Heart right ventricle (tissue), 16 donors: ENCODE measurements at regions of chr5 and their contacts with region 1.

Region 1: GRCh38 chr5:40904205-40904993 is 4.9 kb upstream of the C7 start:
- DNase-seq: peak; percentile 34 to 78
- ATAC-seq: peak; percentile 93 to 96 (median 94)
- H3K4me3 ChIP-seq: no peak overlapping the region
- H3K27ac ChIP-seq: peak overlapping the region in 9 of 10 donors; percentile 6 to 67 (median 57)
- H3K4me1 ChIP-seq: peaks cover 0 to 24% (median 17%) of the 10 kb centered on the region in 9 donors
- H3K27me3 ChIP-seq: no peaks in the 10 kb centered on the region
- CTCF ChIP-seq: peak; percentile 91 to 98 (median 94)

Region 2: DNA sequence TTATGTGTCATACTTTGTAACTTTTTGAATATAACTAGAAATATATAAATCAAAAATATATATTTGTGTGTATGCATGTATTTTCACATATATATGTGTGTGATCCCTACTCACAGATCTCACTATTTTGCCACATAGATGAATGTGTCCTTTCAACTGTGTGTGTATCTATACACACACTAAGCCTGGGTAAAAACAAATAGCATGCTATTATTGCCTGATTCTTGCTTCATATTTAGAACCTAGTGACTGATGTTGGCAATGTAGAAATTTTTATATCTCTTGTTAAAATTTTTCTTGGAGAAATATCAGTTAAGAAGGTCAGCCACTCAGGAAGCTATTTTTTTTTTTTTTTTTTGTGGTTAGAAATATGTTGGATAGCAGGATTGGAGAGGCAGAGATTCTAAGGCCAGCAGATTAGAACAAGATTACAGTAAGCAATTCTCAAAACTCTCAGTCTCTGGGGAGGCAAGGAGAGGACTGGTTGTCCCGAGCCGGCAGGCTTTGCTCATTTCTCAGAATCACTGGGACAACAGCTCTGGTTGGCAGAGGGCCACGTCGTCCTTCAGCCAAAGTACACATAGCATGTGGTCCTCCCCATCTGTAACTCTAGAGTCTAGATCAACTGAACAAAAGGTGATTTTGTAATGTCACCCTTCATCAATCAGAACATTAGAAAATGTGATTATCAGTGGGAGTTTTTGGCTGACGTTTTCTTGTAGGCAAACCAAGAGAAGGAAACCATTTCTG is 289.2 kb after region 1 on chr5:
- intact Hi-C with region 1: loop called in 2 of 10 experiments (anchors 5 to 10 kb)
- DNase-seq: peak; percentile 97
- ATAC-seq: peak; percentile 95 to 98 (median 97)
- H3K4me3 ChIP-seq: no peak overlapping the region
- H3K27ac ChIP-seq: peak overlapping the region; percentile 50 to 84 (median 72)
- H3K4me1 ChIP-seq: peaks cover 4 to 27% (median 18%) of the 10 kb centered on the region in 9 donors
- H3K27me3 ChIP-seq: no peaks in the 10 kb centered on the region
- CTCF ChIP-seq: no peak

Region 3: GRCh38 chr5:41334758-41335157 is 430.4 kb after region 1 on chr5:
- intact Hi-C with region 1: loop called in 1 of 10 experiments (anchors 5 kb)
- DNase-seq: peak in 1 of 2 donors; percentile 13
- ATAC-seq: peak in 7 of 8 donors; percentile 44 to 80 (median 74)
- H3K4me3 ChIP-seq: no peak overlapping the region
- H3K27ac ChIP-seq: peak overlapping the region; percentile 1 to 74 (median 51)
- H3K4me1 ChIP-seq: peaks cover 7 to 49% (median 31%) of the 10 kb centered on the region in 9 donors
- H3K27me3 ChIP-seq: no peaks in the 10 kb centered on the region
- CTCF ChIP-seq: no peak

Region 4: GRCh38 chr5:41524174-41524573 is 619.8 kb after region 1 on chr5:
- intact Hi-C with region 1: loop called in 5 of 10 experiments (anchors 5 to 10 kb)
- DNase-seq: no peak
- ATAC-seq: no peak
- H3K4me3 ChIP-seq: no peak overlapping the region
- H3K27ac ChIP-seq: no peak overlapping the region
- H3K4me1 ChIP-seq: peaks cover 0 to 14% (median 0%) of the 10 kb centered on the region in 9 donors
- H3K27me3 ChIP-seq: no peaks in the 10 kb centered on the region
- CTCF ChIP-seq: peak in 6 of 9 donors; percentile 6 to 25 (median 21)

Region 5: GRCh38 chr5:41641621-41642020 is 737.2 kb after region 1 on chr5:
- intact Hi-C with region 1: loop called in 5 of 10 experiments (anchors 5 to 10 kb)
- DNase-seq: no peak
- ATAC-seq: no peak
- H3K4me3 ChIP-seq: no peak overlapping the region
- H3K27ac ChIP-seq: no peak overlapping the region
- H3K4me1 ChIP-seq: no peaks in the 10 kb centered on the region
- H3K27me3 ChIP-seq: no peaks in the 10 kb centered on the region
- CTCF ChIP-seq: peak in 6 of 9 donors; percentile 19 to 43 (median 36)

Region 6: DNA sequence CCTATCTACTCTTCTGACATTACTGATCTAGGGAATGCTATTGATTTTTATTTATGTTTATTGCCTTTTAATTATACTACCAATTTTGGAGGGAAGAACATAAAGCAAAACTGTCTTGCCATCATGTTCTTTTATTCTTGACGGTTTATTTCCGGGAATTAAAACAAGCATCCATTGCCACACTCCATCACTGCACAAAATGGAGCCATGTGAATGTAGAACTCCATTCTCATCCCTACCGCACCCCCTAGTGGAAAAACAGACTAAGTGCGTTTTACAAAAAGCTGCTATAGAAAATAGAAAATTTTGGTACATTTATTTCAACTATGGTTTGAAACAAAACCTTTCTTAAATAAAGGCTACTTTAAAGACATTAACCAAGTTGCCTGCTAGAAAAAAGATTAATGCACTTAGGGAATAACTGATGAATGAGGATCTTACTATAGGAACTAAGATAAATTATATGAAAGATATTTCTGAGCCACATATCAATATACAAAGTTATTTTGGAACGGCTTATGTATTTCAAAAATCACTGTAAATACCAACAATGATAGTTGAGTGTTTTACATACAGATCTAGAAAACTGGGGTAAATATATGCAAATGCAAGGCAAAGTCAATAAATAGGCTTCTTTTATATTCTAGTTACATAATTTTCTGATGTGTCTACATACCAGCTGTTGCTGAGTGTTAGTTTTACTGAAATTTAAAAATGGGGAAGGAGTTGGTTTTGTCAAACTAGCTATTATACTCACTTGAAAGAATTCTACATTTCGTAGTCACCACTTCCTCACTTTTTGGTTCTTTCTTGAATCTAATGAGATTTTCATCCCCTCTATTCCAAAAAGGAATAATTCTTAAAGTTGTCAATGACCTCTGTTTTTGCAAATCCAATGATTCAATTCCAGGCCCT is 939.3 kb after region 1 on chr5:
- intact Hi-C with region 1: loop called in 9 of 10 experiments (anchors 5 to 10 kb)
- DNase-seq: peak in 1 of 2 donors; percentile 51
- ATAC-seq: peak in 6 of 8 donors; percentile 49 to 77 (median 70)
- H3K4me3 ChIP-seq: no peak overlapping the region
- H3K27ac ChIP-seq: no peak overlapping the region
- H3K4me1 ChIP-seq: peaks cover 0 to 11% (median 0%) of the 10 kb centered on the region in 9 donors
- H3K27me3 ChIP-seq: no peaks in the 10 kb centered on the region
- CTCF ChIP-seq: peak; percentile 56 to 87 (median 79)